Common myeloid progenitor, CD34-positive (primary cell): ENCODE measurements at regions of chr1 and their contacts with region 1.

Region 1: DNA sequence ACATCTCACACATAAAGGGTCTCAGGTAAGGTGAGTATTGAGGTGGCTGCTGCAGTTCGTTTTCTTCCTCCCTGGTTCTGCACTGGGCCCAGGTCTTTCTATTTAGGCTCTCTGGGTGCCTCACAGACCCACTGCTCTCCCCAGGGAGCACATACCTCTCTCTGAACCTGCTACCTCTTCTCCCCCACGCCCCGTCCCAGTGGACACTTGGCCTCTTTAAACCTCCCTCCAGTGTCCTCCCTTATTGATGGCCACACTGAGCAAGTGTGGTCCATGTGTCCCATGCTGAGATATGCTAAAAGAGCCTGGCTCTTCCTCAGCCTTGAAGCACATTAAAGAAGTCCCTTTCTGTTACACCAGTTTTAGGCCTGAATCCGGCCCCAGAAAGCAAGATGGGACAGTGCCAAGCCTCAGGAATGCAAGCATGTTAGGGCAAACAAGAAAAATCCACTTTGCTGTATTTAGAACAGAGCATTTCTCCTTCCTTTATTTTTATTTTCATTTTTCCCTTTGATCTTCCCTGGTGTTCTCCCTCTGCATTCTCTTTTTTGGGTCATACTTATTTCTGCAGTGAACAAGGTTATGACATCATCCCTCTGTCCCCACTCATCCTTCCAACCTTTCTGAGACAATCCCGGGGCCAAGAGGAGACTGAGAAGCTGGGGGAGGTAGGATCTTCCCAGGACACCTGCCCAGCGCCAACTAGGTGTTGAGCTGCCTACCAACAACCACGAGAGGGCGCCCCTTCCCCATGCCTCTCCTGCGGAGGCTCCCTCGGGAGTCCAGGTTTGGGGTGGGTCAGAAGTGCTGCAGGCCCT is 5.0 kb upstream of the CHI3L2 start:
- DNase-seq: peak in 2 of 3 donors; percentile 57 to 58
- H3K4me3 ChIP-seq: peak overlapping the region in 3 of 7 experiments; percentile 13 to 45 (median 33)
- H3K27ac ChIP-seq: peak overlapping the region in 1 of 2 experiments; percentile 31
- H3K4me1 ChIP-seq: peaks cover 22 to 46% (median 36%) of the 10 kb centered on the region in 4 experiments
- H3K27me3 ChIP-seq: no peaks in the 10 kb centered on the region

Region 2: GRCh38 chr1:111203681-111204200 is 18.8 kb before region 1 on chr1:
- CTCF ChIA-PET with region 1: interaction called, 123 read pairs
- POLR2A ChIA-PET with region 1: no interaction called
- DNase-seq: peak; percentile 77 to 93 (median 89)
- H3K4me3 ChIP-seq: peak overlapping the region; percentile 46 to 79 (median 52)
- H3K27ac ChIP-seq: peak overlapping the region in 1 of 2 experiments; percentile 67
- H3K4me1 ChIP-seq: peaks cover 27 to 85% (median 61%) of the 10 kb centered on the region in 4 experiments
- H3K27me3 ChIP-seq: no peaks in the 10 kb centered on the region

Region 3: DNA sequence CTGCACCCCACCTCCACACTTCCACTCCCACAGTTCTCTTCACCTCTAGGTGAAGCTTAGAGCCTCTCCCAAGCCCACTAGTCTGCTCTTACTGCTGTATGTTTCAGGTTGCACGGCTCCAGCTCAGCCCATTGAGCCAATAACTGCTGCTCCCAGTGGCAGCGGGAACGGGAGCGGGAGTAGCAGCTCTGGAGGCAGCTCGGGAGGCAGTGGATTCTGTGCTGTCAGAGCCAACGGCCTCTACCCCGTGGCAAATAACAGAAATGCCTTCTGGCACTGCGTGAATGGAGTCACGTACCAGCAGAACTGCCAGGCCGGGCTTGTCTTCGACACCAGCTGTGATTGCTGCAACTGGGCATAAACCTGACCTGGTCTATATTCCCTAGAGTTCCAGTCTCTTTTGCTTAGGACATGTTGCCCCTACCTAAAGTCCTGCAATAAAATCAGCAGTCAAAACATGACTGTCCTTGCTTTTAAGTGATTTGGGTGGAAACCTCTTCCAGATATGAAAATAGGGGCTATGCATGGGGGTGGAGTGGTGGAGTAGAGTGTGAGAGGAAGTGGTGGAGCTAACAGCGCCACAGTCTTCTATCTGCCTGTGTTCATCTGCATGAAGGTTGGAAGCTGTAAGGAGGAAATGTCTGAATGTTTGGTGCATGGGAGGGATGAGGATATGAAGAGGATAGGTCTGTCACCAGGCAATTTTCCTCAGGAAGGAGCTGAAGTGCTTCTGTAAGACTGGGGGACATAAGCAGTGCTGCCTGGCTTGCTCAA is 97.8 kb after region 1 on chr1:
- CTCF ChIA-PET with region 1: no interaction called
- POLR2A ChIA-PET with region 1: no interaction called
- DNase-seq: no peak
- H3K4me3 ChIP-seq: no peak overlapping the region
- H3K27ac ChIP-seq: no peak overlapping the region
- H3K4me1 ChIP-seq: no peaks in the 10 kb centered on the region
- H3K27me3 ChIP-seq: peaks cover 0 to 2% (median 0%) of the 10 kb centered on the region in 5 experiments